ENCODE measurements at regions of chr11 and their contacts with region 1.

Region 1: DNA sequence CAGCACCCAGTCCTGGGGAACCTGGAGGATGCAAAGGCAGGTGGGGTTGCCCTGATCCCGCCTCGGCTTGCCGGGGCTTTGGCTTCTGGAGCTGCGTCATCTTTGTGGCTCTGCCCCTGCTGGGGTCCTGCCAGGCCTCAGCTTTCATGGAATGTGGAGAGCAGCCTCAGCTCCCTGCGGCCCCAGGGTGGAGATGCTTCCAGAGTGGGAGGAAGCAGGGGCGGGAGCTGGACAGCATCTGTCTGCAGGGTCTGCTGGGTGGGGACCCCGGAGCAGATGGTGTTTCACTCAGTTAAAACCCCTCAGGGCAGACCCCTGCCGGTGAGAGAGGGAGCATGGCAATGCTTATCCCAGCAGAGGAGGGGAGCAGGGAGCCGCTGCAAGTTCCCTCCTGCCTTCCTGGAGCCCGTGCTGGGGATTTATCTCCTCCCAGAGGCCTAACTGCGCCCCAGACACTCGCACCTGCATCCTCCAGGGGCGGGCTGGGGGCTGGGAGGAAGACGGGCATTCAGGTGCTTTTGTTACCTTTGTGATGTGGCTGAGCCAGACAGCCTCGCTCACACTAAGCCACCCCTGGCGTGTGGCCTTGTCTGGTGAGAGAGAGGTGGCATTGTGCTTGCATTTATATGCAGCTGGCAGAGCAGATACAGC is 15.7 kb downstream of the GRIK4 start:
- DNase-seq: peak; percentile 73 to 84 (median 75)
- H3K4me3 ChIP-seq: no peak overlapping the region
- H3K27ac ChIP-seq: no peak overlapping the region
- H3K4me1 ChIP-seq: peaks cover 15% of the 10 kb centered on the region
- H3K27me3 ChIP-seq: no peaks in the 10 kb centered on the region
- CTCF ChIP-seq: peak in 1 of 3 donors; percentile 12
- EP300 ChIP-seq: no peak
- POLR2A ChIP-seq: no peak

Region 2: DNA sequence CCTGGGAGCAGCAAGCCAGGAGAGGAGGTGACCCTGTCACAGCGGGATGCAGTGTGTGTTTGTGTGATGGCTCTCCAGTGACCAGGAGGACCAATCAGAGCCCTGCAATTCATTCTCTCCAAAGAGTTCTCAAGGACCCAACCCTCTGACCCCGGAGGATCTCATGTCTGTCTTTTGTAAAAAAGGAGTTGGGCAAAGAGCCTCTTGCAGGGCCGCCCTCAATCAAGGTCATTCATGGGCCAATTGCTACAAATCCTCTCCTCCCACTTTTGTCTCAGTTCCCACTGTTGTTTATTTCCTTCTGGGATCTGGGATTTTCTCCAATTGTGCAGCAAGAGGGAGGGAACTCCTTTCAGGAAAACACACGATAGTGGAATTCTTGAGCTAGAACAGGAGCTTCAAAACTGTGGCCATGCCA is 577.8 kb after region 1 on chr11:
- intact Hi-C with region 1: loop called in 1 of 4 experiments (anchors 5 kb)
- DNase-seq: peak; percentile 46 to 67 (median 60)
- H3K4me3 ChIP-seq: no peak overlapping the region
- H3K27ac ChIP-seq: peak overlapping the region in 1 of 2 donors; percentile 64
- H3K4me1 ChIP-seq: peaks cover 12% of the 10 kb centered on the region
- H3K27me3 ChIP-seq: no peaks in the 10 kb centered on the region
- CTCF ChIP-seq: no peak
- EP300 ChIP-seq: no peak
- POLR2A ChIP-seq: no peak

Measured in ovary (tissue), 10 donors.